ENCODE measurements at regions of chr11 and their contacts with region 1.

Region 1: DNA sequence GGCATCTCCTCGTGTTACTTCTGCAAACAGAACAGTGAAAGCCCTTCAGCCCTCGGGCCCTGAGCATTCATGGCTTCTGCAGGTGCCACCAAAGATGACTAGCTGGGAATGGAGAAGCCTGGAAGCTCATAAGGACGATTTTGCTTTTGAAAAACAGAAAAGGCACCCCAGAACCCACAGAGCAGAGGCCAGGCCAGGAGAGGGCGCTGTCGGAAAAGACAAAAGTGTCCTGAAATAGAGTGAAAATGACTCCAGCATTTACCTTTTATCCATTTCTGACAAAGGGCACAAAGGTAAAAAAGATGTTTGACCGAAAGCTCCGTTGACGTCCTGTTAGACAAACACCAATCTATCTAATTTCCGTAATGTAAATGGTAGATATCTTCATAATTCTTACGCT is 37.6 kb downstream of the ZNF195 start:
- DNase-seq: peak; percentile 36 to 70 (median 51)
- H3K4me3 ChIP-seq: no peak overlapping the region
- H3K4me3 Mint-ChIP-seq: no peak overlapping the region
- H3K27ac ChIP-seq: no peak overlapping the region
- H3K27ac Mint-ChIP-seq: no peak overlapping the region
- H3K4me1 ChIP-seq: no peaks in the 10 kb centered on the region
- H3K4me1 Mint-ChIP-seq: no peaks in the 10 kb centered on the region
- H3K27me3 ChIP-seq: peaks cover 16% of the 10 kb centered on the region
- H3K27me3 Mint-ChIP-seq: peaks cover 16 to 45% of the 10 kb centered on the region in 2 donors

Region 2: GRCh38 chr11:3412837-3413236 is 71.5 kb after region 1 on chr11:
- CTCF ChIA-PET with region 1: interaction called, 16 read pairs
- POLR2A ChIA-PET with region 1: no interaction called
- DNase-seq: no peak
- H3K4me3 ChIP-seq: no peak overlapping the region
- H3K4me3 Mint-ChIP-seq: no peak overlapping the region
- H3K27ac ChIP-seq: no peak overlapping the region
- H3K27ac Mint-ChIP-seq: no peak overlapping the region
- H3K4me1 ChIP-seq: no peaks in the 10 kb centered on the region
- H3K4me1 Mint-ChIP-seq: peaks cover 5 to 6% (median 5%) of the 10 kb centered on the region in 3 donors
- H3K27me3 ChIP-seq: no peaks in the 10 kb centered on the region
- H3K27me3 Mint-ChIP-seq: no peaks in the 10 kb centered on the region

Measured in CD8-positive, alpha-beta memory T cell (primary cell).